K562 (cell line): ENCODE measurements at regions of chr9 and their contacts with region 1.

Region 1: GRCh38 chr9:32940740-32941139 is 60.7 kb downstream of the APTX start:
- DNase-seq: peak in 3 of 4 experiments; percentile 9 to 66 (median 13)
- ATAC-seq: no peak; the same call in 2 of the 3 replicates
- H3K4me3 ChIP-seq: no peak overlapping the region
- H3K27ac ChIP-seq: 0 out of 3 replicates have a peak overlapping the region, but pooled peaks have one; percentile 41
- H3K4me1 ChIP-seq: peaks cover 15 to 26% of the 10 kb centered on the region in 2 experiments; a peak in 4 of 5 replicates
- H3K27me3 ChIP-seq: no peaks in the 10 kb centered on the region
- CTCF ChIP-seq: no peak
- EP300 ChIP-seq: no peak
- POLR2A ChIP-seq: no peak
- RAD21 ChIP-seq: no peak

Region 2: DNA sequence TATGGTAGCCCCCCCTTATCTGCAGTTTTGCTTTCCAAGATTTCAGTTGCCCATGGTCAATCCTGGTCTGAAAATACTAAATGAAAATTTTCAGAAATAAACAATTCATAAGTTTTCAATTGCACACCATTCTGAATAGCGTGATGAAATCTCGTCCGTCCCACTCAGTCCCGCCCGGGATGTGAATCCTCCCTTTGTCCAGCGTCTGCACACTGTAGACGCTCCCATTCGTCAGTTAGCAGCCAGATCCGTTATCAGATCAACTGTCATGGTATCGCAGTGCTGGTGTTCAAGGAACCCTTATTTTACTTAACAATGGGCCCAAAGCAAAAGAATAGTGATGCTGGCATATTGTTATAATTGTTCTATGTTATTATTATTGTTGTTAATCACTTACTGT is 58.8 kb before region 1 on chr9:
- CTCF ChIA-PET with region 1: no interaction called
- POLR2A ChIA-PET with region 1: no interaction called
- in situ Hi-C with region 1: no loop called
- intact Hi-C with region 1: loop called (anchors 10 kb)
- DNase-seq: peak in 1 of 4 experiments; percentile 23
- ATAC-seq: peak; percentile 62
- H3K4me3 ChIP-seq: no peak overlapping the region
- H3K27ac ChIP-seq: no peak overlapping the region
- H3K4me1 ChIP-seq: peaks cover 15 to 22% of the 10 kb centered on the region in 2 experiments; a peak in 4 of 5 replicates
- H3K27me3 ChIP-seq: no peaks in the 10 kb centered on the region
- CTCF ChIP-seq: no peak
- EP300 ChIP-seq: no peak
- POLR2A ChIP-seq: no peak
- RAD21 ChIP-seq: no peak